SK-MEL-5 (cell line): ENCODE measurements at regions of chr2 and their contacts with region 1.

Region 1: DNA sequence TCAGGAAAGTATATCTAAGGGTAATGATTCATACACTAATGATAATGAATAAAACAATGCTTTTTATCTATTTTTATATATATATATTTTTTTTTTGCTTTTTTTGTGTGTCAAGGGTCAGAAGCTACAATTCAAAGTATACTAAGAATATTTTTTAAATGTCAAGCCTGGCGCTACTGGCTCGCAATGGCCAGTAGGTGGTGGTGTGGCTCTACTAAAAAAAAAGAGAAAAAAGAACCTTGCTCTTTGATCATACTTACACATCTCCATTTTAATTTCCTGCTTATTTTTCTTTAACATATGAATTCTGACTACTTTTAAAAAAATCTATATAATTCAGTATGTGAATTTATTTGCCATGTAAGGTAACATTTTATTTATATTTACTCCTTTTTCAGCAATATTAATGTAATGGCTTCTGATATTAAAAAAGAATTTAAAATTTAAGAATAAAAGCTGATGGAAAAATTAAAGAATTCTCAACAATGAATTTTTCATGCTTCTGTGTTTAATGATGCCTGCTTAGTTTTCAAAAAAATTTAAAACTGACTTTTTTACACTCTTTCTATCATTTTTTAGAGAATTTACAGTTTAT is 232.9 kb downstream of the GULP1 start:
- DNase-seq: peak; percentile 74

Region 2: DNA sequence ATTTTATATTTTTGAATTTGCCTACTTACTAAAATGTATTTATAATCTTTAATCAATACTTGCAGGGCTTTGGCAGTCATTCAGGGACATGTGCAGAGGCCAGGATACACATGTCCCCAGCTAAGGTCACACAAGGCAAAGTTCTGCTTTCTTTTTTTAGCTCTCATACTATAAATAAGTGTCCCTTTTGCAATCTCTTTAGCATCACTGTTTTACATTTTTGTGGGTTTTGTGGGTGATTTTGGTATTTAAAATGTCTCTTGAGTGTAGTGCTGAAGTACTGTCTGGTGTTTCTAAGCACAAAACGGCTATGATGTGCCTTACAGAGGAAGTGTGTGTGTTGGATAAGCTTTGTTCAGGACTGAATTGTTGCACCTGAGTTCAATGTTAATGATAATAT is 541.9 kb before region 1 on chr2:
- in situ Hi-C with region 1: loop called (anchors 25 kb)
- DNase-seq: peak; percentile 57

Region 3: DNA sequence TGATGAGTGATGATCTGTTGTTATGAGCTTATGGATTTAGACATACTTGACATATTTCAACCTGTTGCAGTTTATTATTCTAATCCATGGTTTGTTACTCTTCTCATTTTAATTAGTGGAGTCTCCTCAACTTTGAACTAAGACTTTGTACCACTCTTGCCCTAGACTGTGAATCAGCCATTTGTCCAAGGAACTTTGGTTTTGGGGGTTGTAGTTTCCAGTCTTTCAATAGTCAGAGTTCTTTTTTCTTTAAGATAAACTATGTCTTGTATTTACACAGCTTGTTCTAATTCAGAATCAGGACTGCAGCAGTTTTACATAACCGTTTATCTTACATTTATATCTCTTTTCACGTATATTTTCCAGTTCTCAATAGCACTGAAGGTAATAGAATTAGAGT is 99.3 kb before region 1 on chr2:
- in situ Hi-C with region 1: no loop called
- DNase-seq: no peak

Region 4: GRCh38 chr2:188478724-188479123 is 45.9 kb before region 1 on chr2:
- in situ Hi-C with region 1: no loop called
- DNase-seq: peak; percentile 85

Region 5: GRCh38 chr2:188610827-188611226 is 86.2 kb after region 1 on chr2:
- in situ Hi-C with region 1: no loop called
- DNase-seq: no peak

Region 6: GRCh38 chr2:188678882-188679281 is 154.3 kb after region 1 on chr2:
- in situ Hi-C with region 1: no loop called
- DNase-seq: no peak